ENCODE measurements at regions of chr7 and their contacts with region 1.

Region 1: GRCh38 chr7:8831376-8831775 is 398.0 kb downstream of the NXPH1 start:
- DNase-seq: no peak
- ATAC-seq: no peak
- H3K4me3 ChIP-seq: no peak overlapping the region
- H3K27ac ChIP-seq: no peak overlapping the region
- H3K4me1 ChIP-seq: no peaks in the 10 kb centered on the region; a peak in 1 of 5 replicates
- H3K27me3 ChIP-seq: no peaks in the 10 kb centered on the region
- CTCF ChIP-seq: no peak
- EP300 ChIP-seq: no peak
- POLR2A ChIP-seq: no peak
- RAD21 ChIP-seq: no peak

Region 2: GRCh38 chr7:8765374-8765773 is 66.0 kb before region 1 on chr7:
- CTCF ChIA-PET with region 1: no interaction called
- POLR2A ChIA-PET with region 1: interaction called, 3 read pairs
- in situ Hi-C with region 1: no loop called
- intact Hi-C with region 1: loop called (anchors 5 kb)
- DNase-seq: peak in 1 of 4 experiments; percentile 77
- ATAC-seq: peak; percentile 78
- H3K4me3 ChIP-seq: peak overlapping the region; percentile 44
- H3K27ac ChIP-seq: peak overlapping the region; percentile 97
- H3K4me1 ChIP-seq: peaks cover 0 to 15% of the 10 kb centered on the region in 2 experiments; a peak in 2 of 5 replicates
- H3K27me3 ChIP-seq: no peaks in the 10 kb centered on the region
- CTCF ChIP-seq: no peak
- EP300 ChIP-seq: peak; percentile 23; the same call in 1 of the 2 replicates
- POLR2A ChIP-seq: no peak
- RAD21 ChIP-seq: no peak

Measured in K562 (cell line).